H1 (cell line): ENCODE measurements at regions of chr1 and their contacts with region 1.

Region 1: GRCh38 chr1:156728597-156729462 is at the start of gene ISG20L2:
- DNase-seq: peak; percentile 91 to 93
- H3K4me3 ChIP-seq: peak within 1 kb of the TSS; percentile 83 to 100 (median 94)
- H3K27ac ChIP-seq: peak within 1 kb of the TSS; percentile 89
- H3K4me1 ChIP-seq: peaks cover 0 to 23% (median 18%) of the 10 kb centered on the region in 4 experiments; a peak in 6 of 7 replicates
- H3K27me3 ChIP-seq: no peaks in the 10 kb centered on the region
- CTCF ChIP-seq: no peak
- EP300 ChIP-seq: no peak
- POLR2A ChIP-seq: peak; percentile 91 to 92
- RAD21 ChIP-seq: no peak
- total RNA-seq, gene ISG20L2: 47.5 and 53.1 TPM in 2 replicates

Region 2: GRCh38 chr1:156652131-156652991 is 76.5 kb before region 1 on chr1:
- CTCF ChIA-PET with region 1: interaction called, 4,284 read pairs
- POLR2A ChIA-PET with region 1: interaction called, 3 read pairs
- DNase-seq: peak in 1 of 2 experiments; percentile 92
- H3K4me3 ChIP-seq: no peak overlapping the region
- H3K27ac ChIP-seq: no peak overlapping the region
- H3K4me1 ChIP-seq: peaks cover 2 to 9% (median 4%) of the 10 kb centered on the region in 4 experiments; a peak in 6 of 7 replicates
- H3K27me3 ChIP-seq: peaks cover 2 to 32% (median 26%) of the 10 kb centered on the region in 4 experiments
- CTCF ChIP-seq: no peak
- EP300 ChIP-seq: no peak
- POLR2A ChIP-seq: no peak
- RAD21 ChIP-seq: no peak

Region 3: DNA sequence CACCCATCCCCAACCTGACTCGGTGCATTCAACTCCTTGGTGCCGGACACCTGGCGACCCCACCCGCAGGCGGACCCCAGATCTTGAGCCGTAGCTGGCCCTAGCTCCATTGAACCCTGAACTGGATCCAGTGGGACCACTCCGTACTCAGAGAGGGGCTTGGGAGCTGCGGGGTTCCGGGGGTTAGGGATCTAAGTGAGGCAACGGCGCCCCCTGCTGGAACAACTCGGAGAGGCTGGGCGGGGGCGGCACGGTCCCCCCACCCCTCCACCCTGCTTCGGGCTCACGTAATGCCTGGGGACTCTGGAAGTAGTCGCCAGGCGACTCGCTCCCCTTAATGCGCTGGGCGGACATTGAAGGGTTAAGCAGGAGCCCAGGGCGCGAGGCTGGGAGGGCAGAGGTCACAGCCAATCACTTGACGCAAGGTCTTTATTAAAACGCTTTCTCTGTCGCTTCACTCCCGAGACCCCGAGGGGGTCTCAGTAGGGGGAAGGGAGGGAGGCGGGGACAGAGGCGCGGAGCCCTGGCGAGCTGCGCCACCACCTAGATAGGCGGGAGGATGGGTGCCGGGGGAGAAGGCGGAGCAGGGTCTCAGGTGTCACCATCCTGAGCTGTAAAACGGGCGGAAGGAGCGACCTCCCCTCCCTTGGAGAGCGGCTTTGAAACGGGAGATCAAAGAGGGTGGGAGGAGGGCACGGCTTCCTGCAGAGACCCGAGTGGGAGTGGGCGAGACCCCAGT is 22.7 kb before region 1 on chr1:
- CTCF ChIA-PET with region 1: interaction called, 4,284 read pairs
- POLR2A ChIA-PET with region 1: interaction called, 130 read pairs
- DNase-seq: peak; percentile 86 to 98
- H3K4me3 ChIP-seq: peak overlapping the region; percentile 50 to 80 (median 70)
- H3K27ac ChIP-seq: peak overlapping the region; percentile 79
- H3K4me1 ChIP-seq: peaks cover 27 to 57% (median 45%) of the 10 kb centered on the region in 4 experiments
- H3K27me3 ChIP-seq: peaks cover 0 to 19% (median 8%) of the 10 kb centered on the region in 4 experiments; a peak in 4 of 7 replicates
- CTCF ChIP-seq: peak; percentile 72 to 86 (median 81)
- EP300 ChIP-seq: peak in 1 of 2 experiments; percentile 51; a peak in 1 of 3 replicates
- POLR2A ChIP-seq: no peak
- RAD21 ChIP-seq: peak; percentile 78 to 88

Region 4: DNA sequence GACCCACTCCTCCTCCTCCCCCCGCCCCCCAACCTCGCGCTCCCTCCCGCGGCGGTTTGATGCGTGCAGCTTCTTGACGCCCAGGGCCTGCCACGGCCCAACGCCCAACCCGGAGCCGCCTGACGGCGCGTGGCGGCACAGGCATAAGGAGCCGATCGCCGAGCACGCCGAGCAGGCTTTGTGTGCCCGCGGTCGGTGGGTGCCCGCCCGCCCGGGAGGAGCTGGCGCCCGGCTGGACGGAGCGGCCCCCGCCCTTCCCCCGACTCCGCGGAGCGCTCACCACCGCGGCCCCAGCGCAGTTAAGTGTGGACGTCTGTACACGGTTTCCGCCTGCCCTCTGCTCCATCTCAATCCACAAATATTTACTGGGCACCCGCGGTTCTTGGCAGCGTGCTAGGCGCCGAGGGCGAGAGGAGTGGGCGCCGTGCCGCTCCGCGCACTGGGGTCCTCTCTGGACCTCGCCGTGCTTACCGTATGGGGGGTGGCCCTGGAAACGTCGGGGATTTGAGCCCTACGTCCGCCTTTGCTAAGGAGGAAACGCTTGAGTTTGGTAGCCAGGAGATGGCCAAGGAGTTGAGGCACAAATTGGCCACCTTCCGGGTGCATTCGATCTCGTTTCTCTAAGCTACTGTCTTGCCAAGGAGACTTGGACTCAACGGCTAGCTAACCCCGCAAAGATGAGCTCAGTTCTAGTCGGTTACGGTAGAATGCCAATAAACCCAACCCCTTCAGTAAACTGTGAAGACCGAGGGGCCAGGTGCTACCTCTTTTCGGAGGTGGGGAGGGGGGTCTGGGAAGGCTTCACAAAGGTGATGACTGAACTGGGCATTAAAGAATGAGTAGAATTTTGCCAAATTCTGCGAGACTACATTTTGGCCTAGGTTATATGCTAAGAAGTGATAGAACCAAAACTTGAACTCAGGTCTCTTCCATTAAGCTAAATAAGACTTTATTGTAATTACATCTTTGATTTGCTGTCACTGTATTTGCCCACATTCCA is 23.2 kb after region 1 on chr1:
- CTCF ChIA-PET with region 1: interaction called, 29 read pairs
- POLR2A ChIA-PET with region 1: interaction called, 214 read pairs
- DNase-seq: peak; percentile 91 to 93
- H3K4me3 ChIP-seq: peak overlapping the region; percentile 86 to 100 (median 95)
- H3K27ac ChIP-seq: peak overlapping the region; percentile 85
- H3K4me1 ChIP-seq: peaks cover 24 to 36% (median 27%) of the 10 kb centered on the region in 4 experiments
- H3K27me3 ChIP-seq: no peaks in the 10 kb centered on the region
- CTCF ChIP-seq: no peak; a peak in 1 of 4 replicates
- EP300 ChIP-seq: peak in 1 of 2 experiments; percentile 84; a peak in 1 of 3 replicates
- POLR2A ChIP-seq: peak; percentile 65 to 79; a peak in 2 of 3 replicates
- RAD21 ChIP-seq: no peak

Region 5: GRCh38 chr1:156781585-156782186 is 52.9 kb after region 1 on chr1:
- CTCF ChIA-PET with region 1: interaction called, 20 read pairs
- POLR2A ChIA-PET with region 1: interaction called, 3 read pairs
- DNase-seq: no peak
- H3K4me3 ChIP-seq: no peak overlapping the region
- H3K27ac ChIP-seq: no peak overlapping the region
- H3K4me1 ChIP-seq: no peaks in the 10 kb centered on the region
- H3K27me3 ChIP-seq: no peaks in the 10 kb centered on the region
- CTCF ChIP-seq: no peak
- EP300 ChIP-seq: no peak
- POLR2A ChIP-seq: no peak
- RAD21 ChIP-seq: no peak

Region 6: DNA sequence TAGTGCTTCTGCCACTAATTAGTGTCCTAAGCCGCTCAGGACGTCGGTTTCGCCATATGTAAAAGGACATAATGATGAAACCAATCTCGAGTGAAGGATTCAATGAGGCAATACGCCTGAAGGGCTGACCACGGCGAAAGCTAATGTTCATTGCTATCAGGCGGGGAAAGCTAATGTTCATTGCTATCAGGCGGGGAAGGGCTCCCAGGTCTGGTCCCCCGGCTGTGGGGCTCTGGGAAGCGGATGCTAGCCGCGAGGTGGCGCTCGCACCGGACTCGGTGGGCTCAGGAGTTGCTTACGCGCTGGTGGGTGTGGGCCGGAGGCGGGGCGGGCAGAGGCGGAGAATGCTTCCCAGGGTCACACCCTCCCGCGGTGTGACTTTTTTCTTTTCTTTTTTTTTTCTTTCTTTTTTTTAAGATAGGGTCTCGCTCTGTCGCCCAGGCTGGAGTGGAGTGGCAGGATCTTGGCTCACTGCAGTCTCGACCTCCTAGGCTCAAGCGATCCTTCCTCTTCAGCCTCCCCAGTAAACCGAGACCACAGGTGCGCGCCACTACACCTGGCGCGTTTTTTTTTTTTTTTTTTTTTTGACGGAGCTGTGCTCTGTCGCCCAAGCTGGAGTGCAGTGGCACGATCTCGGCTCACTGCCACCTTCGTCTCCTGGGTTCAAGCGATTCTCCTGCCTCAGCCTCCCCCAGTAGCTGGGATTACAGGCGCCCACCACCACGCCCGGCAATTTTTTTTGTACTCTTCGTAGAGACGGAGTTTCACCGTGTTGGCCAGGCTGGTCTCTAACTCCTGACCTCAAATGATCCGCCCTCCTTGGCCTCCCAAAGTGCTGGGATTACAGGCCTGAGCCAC is 163.6 kb after region 1 on chr1:
- CTCF ChIA-PET with region 1: interaction called, 26 read pairs
- POLR2A ChIA-PET with region 1: interaction called, 6 read pairs
- DNase-seq: peak; percentile 62 to 97
- H3K4me3 ChIP-seq: peak overlapping the region in 2 of 4 experiments; percentile 14 to 55; a peak in 4 of 8 replicates
- H3K27ac ChIP-seq: no peak overlapping the region
- H3K4me1 ChIP-seq: peaks cover 0 to 16% (median 9%) of the 10 kb centered on the region in 4 experiments; a peak in 5 of 7 replicates
- H3K27me3 ChIP-seq: peaks cover 8 to 54% (median 43%) of the 10 kb centered on the region in 4 experiments
- CTCF ChIP-seq: peak; percentile 84 to 93 (median 92)
- EP300 ChIP-seq: no peak
- POLR2A ChIP-seq: no peak
- RAD21 ChIP-seq: peak; percentile 45 to 63